Activated CD4-positive, alpha-beta memory T cell treated with anti-CD3 and anti-CD28 coated beads for 36 hours (primary cell): ENCODE measurements at regions of chr1 and their contacts with region 1.

Region 1: GRCh38 chr1:154404984-154405761 is at the start of gene IL6R:
- DNase-seq: peak; percentile 86
- H3K4me3 Mint-ChIP-seq: peak within 1 kb of the TSS; percentile 92
- H3K27ac Mint-ChIP-seq: peak within 1 kb of the TSS; percentile 93
- H3K4me1 Mint-ChIP-seq: peaks cover 82% of the 10 kb centered on the region
- H3K27me3 Mint-ChIP-seq: no peaks in the 10 kb centered on the region
- total RNA-seq, gene IL6R: 30.2 to 30.5 TPM

Region 2: DNA sequence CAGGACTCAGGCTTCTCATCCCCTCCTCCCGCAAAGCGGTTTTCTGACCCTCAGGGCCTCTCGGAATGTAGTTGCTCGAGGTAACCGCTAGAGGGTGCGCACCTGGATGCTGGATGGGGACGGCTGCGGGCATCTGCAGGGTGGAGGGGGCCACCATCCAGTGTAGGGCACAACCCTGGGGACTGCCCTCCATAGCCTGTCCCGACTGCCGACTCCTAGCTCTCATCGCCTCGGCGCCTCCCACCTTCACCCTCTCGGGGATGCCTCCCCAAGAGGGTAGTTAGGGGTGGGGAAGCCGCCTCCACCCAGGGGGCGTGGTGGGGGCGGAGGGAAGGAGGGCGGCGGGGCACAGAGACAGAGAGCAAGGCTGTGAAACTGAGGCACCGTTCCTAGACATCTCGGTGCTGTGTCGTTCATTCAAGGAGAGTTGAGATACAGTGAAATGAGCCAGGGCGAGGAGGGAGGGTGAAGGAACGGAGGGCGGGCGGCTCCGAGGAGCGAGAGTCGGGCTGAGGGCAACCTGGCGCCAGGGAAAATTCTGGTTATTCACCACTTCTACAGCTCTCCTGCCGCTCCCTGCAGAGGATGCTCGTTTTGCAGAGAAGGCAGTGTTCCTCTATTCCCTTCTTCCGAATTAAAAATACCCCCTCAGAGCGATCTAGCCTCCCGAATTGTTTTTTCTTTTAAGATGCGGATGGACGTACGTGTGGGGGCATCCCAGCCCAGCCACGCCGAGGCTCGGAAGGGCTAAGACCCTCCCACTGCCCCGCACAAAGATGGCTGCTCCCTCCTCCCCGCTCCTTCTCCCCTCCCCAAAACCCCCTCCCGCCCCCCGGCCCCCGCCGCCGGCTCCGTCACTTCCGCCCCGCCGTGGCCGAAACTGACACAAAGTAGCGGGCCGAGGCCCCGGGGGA is 80.2 kb before region 1 on chr1 and contains the start of gene ATP8B2:
- CTCF ChIA-PET with region 1: interaction called, 11 read pairs
- POLR2A ChIA-PET with region 1: no interaction called
- intact Hi-C with region 1: no loop called
- DNase-seq: peak; percentile 91
- H3K4me3 Mint-ChIP-seq: peak within 1 kb of the TSS; percentile 98
- H3K27ac Mint-ChIP-seq: peak within 1 kb of the TSS; percentile 94
- H3K4me1 Mint-ChIP-seq: peaks cover 36% of the 10 kb centered on the region
- H3K27me3 Mint-ChIP-seq: no peaks in the 10 kb centered on the region
- total RNA-seq, gene ATP8B2: 58.5 to 59.9 TPM

Region 3: GRCh38 chr1:154386643-154387352 is 18.4 kb before region 1 on chr1:
- CTCF ChIA-PET with region 1: interaction called, 13 read pairs
- POLR2A ChIA-PET with region 1: interaction called, 19 read pairs
- intact Hi-C with region 1: loop called (anchors 1 kb)
- DNase-seq: peak; percentile 92
- H3K4me3 Mint-ChIP-seq: peak overlapping the region; percentile 69
- H3K27ac Mint-ChIP-seq: peak overlapping the region; percentile 95
- H3K4me1 Mint-ChIP-seq: peaks cover 36% of the 10 kb centered on the region
- H3K27me3 Mint-ChIP-seq: no peaks in the 10 kb centered on the region

Region 4: DNA sequence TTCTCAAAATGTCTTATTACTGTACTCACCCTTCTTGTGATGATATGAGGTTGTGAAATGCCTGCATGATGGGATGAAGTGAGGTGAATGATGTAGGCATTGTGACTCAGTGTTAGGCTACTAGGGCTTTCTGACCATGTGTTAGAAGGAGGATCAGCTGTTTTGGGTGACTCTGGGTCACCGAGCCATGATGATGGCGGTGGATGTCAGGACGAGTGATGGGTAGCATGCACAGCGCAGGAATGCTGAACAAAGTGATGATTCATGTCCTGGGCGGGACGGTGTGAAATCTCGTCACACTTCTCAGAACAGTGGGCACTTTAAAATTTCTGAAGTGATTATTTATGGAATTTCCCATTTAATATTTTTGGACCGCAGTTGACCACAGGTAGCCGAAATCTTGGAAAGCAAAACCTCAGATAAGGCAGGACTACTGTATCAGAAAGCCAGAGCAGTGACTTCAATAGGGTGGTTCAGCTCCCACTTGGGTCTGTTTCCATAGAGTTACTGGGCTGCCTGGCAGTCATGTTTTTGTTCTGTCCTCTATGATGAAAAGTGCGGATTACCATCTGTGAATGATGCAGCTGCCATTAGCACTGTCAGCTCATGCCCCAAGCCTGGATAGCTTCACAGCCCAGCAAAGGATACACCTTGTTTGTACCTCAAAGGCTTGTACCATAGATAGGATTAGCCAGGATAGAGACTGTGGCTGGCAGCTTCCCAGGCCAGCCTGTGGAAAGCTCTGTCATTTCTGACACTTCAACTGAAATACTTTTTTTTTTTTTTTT is 26.6 kb after region 1 on chr1:
- CTCF ChIA-PET with region 1: interaction called, 5 read pairs
- POLR2A ChIA-PET with region 1: interaction called, 25 read pairs
- intact Hi-C with region 1: loop called (anchors 1 kb)
- DNase-seq: peak; percentile 86
- H3K4me3 Mint-ChIP-seq: no peak overlapping the region
- H3K27ac Mint-ChIP-seq: peak overlapping the region; percentile 85
- H3K4me1 Mint-ChIP-seq: peaks cover 56% of the 10 kb centered on the region
- H3K27me3 Mint-ChIP-seq: no peaks in the 10 kb centered on the region

Region 5: DNA sequence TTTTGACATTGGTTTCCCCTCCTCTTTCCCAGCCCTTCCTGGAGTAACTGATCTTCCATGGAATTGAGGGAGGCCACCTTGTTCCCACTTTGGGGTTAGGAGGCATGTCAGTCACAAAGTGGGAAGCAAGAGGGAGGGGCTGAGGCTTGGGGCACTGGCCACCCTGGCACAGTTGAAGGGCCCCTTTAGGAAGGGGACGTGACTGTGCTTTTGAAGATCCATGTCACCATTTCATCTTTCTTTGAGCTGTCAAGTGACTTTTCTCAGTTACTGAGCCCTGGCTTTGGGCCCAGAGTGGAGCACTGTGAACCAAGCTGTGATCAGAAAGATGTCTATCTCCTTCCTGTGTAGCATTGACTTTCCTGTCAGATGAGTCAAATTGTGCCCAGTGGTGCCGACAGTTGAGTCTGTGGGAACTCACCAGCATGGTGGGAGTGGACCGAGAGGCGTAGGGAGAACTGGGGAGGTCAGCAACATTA is 58.4 kb after region 1 on chr1:
- CTCF ChIA-PET with region 1: interaction called, 17 read pairs
- POLR2A ChIA-PET with region 1: interaction called, 5 read pairs
- intact Hi-C with region 1: loop called (anchors 1 kb)
- DNase-seq: peak; percentile 89
- H3K4me3 Mint-ChIP-seq: peak overlapping the region; percentile 1
- H3K27ac Mint-ChIP-seq: peak overlapping the region; percentile 66
- H3K4me1 Mint-ChIP-seq: peaks cover 82% of the 10 kb centered on the region
- H3K27me3 Mint-ChIP-seq: no peaks in the 10 kb centered on the region

Region 6: GRCh38 chr1:154607609-154608396 is 202.6 kb after region 1 on chr1 and contains the start of gene ADAR:
- CTCF ChIA-PET with region 1: no interaction called
- POLR2A ChIA-PET with region 1: no interaction called
- intact Hi-C with region 1: loop called (anchors 5 kb)
- DNase-seq: peak; percentile 96
- H3K4me3 Mint-ChIP-seq: peak within 1 kb of the TSS; percentile 90
- H3K27ac Mint-ChIP-seq: peak within 1 kb of the TSS; percentile 98
- H3K4me1 Mint-ChIP-seq: peaks cover 71% of the 10 kb centered on the region
- H3K27me3 Mint-ChIP-seq: no peaks in the 10 kb centered on the region
- total RNA-seq, gene ADAR: 270 to 289 TPM

Region 7: GRCh38 chr1:154775621-154776605 is 370.7 kb after region 1 on chr1:
- CTCF ChIA-PET with region 1: no interaction called
- POLR2A ChIA-PET with region 1: no interaction called
- intact Hi-C with region 1: no loop called
- DNase-seq: no peak
- H3K4me3 Mint-ChIP-seq: no peak overlapping the region
- H3K27ac Mint-ChIP-seq: no peak overlapping the region
- H3K4me1 Mint-ChIP-seq: peaks cover 16% of the 10 kb centered on the region
- H3K27me3 Mint-ChIP-seq: peaks cover 2% of the 10 kb centered on the region